ENCODE measurements at regions of chr10 and their contacts with region 1.

Region 1: GRCh38 chr10:101773923-101774588 is 1.9 kb downstream of the FGF8 start:
- DNase-seq: no peak
- H3K4me3 ChIP-seq: no peak overlapping the region
- H3K27ac ChIP-seq: no peak overlapping the region
- H3K4me1 ChIP-seq: peaks cover 11% of the 10 kb centered on the region
- CTCF ChIP-seq: no peak

Region 2: DNA sequence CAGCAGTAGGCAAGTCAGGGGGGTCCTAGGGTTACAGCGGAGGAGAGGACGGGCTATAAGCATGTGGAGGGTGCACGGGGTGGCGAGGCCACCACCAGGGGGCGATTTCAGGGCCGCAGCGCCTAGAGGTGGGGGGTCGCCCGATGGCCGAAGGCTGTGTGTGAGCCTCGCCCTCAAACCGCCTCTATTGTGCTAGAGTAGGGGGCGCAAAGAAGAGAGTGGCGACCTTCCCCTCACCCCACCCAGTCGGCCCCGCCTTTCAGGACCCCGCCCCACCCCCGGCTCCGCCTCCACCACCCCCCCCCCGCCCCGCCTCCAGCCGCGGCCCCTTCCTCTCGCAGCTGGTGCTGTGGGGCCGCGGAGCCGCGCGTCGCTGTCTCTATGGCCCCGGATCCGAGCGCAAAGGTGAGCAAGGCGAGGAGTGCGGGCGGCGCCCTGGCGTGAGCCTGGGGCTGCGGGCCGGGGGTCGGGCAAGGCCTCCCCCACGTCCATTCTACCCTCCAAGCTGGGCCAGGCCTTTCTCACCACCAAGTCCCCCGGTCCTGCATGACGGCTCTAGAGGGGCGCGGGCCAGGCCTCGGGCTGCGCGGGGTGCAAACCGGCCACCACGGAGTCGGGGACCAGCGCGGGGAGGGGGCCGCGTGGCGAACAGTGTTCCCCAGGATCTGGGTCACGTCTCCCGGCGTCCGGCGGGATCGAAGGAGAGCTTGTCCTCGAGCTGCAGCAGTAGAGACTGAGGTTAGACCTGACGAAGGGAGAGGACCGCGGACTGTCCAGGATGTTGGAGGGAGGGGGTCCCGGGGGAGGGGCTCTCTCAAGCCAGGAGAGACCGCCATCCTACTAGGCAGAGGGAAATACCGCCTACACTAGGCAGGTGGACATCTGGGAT is 804.6 kb before region 1 on chr10 and contains the start of gene SEMA4G:
- CTCF ChIA-PET with region 1: interaction called, 10 read pairs
- POLR2A ChIA-PET with region 1: no interaction called
- intact Hi-C with region 1: no loop called
- DNase-seq: peak; percentile 69
- H3K4me3 ChIP-seq: peak within 1 kb of the TSS; percentile 52
- H3K27ac ChIP-seq: no peak within 1 kb of the TSS
- H3K4me1 ChIP-seq: peaks cover 14% of the 10 kb centered on the region
- CTCF ChIP-seq: peak; percentile 77
- total RNA-seq, gene SEMA4G: 0.41 TPM in 1 of 2 replicates, not detected in the other

Region 3: GRCh38 chr10:101686133-101686925 is 87.7 kb before region 1 on chr10:
- CTCF ChIA-PET with region 1: no interaction called
- POLR2A ChIA-PET with region 1: no interaction called
- intact Hi-C with region 1: no loop called
- DNase-seq: no peak
- H3K4me3 ChIP-seq: no peak overlapping the region
- H3K27ac ChIP-seq: no peak overlapping the region
- H3K4me1 ChIP-seq: peaks cover 16% of the 10 kb centered on the region
- CTCF ChIP-seq: no peak

Measured in OCI-LY7 (cell line).